Common myeloid progenitor, CD34-positive (primary cell): ENCODE measurements at regions of chr2 and their contacts with region 1.

Region 1: GRCh38 chr2:237421542-237422116 is 7.7 kb upstream of the COL6A3 start:
- DNase-seq: peak; percentile 73 to 74 (median 74)
- H3K4me3 ChIP-seq: peak overlapping the region in 2 of 7 experiments; percentile 19 to 57
- H3K27ac ChIP-seq: no peak overlapping the region
- H3K4me1 ChIP-seq: peaks cover 0 to 8% (median 3%) of the 10 kb centered on the region in 4 experiments
- H3K27me3 ChIP-seq: peaks cover 0 to 9% (median 0%) of the 10 kb centered on the region in 5 experiments

Region 2: DNA sequence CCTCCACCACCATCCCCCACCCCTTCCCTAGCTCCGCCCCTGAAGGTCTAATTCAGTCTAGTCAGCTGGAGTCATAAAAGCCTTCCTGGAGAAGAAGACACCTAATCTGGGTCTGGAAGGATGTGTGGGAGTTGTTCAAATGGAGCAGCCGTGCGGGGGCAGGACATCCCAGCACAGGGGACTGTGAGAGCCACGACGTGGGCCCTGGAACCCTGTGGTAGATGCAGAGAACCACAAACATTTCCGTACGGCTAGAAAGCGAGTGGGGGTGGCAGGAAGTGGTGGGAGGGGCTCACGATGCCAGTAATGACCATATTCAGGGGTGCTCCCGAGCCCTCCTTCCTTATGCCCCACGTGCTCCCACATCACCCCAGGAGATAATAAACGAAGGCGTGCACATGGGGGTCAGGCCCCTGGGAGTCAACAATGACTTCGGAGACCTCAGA is 13.3 kb after region 1 on chr2:
- CTCF ChIA-PET with region 1: interaction called, 32 read pairs
- POLR2A ChIA-PET with region 1: no interaction called
- DNase-seq: peak; percentile 69 to 90 (median 87)
- H3K4me3 ChIP-seq: peak overlapping the region in 5 of 7 experiments; percentile 4 to 43 (median 6)
- H3K27ac ChIP-seq: peak overlapping the region in 1 of 2 experiments; percentile 12
- H3K4me1 ChIP-seq: peaks cover 13 to 64% (median 55%) of the 10 kb centered on the region in 4 experiments
- H3K27me3 ChIP-seq: no peaks in the 10 kb centered on the region